Aorta (tissue), 5 donors: ENCODE measurements at regions of chr1 and their contacts with region 1.

Region 1: DNA sequence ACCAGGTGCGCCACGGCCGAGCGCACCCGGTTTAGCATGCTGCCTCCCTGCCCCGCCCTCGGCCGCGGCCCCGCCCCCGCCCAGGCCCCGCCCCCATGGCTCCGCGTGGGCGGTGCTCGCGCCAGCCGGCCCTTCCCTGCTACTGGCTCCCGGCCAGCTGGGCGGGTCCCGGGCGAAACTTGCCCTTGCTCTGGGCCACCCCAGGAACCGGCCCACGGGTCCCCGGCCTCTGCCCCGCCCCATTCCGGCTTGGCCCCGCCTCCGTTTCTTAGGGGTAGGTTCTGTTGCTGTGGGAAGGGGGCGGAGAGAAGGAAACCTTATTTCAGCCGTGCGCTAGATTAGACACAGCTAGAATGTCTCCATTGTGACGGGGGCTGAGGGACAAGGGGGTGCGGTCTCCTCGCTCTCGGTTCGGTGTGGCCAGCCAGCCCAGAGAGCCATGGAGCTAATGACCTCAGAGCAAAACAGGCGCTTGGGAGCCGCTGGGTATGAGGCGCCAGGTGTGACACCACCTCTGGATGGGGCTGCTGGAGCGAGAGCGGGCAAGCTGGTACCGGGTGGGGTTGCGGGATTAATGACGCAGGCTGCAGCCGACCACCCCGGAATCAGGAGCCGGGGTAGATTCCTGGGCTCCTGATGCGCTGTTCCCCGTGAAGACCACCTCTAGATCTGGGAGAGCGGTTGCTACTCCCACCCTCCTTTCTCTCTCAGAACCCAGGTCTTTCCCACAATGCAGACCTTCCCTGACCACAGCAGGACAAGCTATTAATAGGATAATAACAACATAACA is at the start of gene PPM1J:
- DNase-seq: peak; percentile 99 to 100
- ATAC-seq: peak; percentile 93
- H3K4me3 ChIP-seq: peak within 1 kb of the TSS; percentile 14 to 37
- H3K27ac ChIP-seq: no peak within 1 kb of the TSS
- H3K4me1 ChIP-seq: no peaks in the 10 kb centered on the region
- H3K27me3 ChIP-seq: no peaks in the 10 kb centered on the region
- total RNA-seq, gene PPM1J: 3.7 to 4.3 TPM

Region 2: GRCh38 chr1:112501810-112502641 is 213.4 kb before region 1 on chr1:
- intact Hi-C with region 1: loop called in 1 of 2 experiments (anchors 5 kb)
- DNase-seq: peak; percentile 81 to 91
- ATAC-seq: peak; percentile 84
- H3K4me3 ChIP-seq: peak overlapping the region; percentile 27 to 28
- H3K27ac ChIP-seq: no peak overlapping the region
- H3K4me1 ChIP-seq: no peaks in the 10 kb centered on the region
- H3K27me3 ChIP-seq: no peaks in the 10 kb centered on the region

Region 3: DNA sequence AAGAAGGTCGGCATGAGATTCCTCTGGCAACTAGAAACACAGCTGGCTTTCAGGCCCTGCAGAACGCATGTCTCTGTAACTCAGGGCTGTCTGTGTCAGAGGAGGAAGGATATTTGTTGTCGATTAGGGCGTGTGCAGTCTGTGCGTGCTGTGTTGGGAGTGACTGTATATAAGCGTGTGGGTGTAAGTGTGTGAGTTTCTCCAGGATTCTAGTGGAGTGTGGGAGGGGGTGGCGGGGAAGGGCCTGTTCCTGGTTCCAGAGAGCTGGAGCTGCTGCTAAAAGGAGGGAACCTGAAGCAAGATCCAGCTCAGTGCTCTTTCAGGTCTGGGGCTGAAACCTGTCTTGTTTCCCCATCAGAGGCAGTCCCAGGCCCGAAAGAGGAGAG is 166.3 kb after region 1 on chr1:
- intact Hi-C with region 1: loop called (anchors 2 to 5 kb)
- DNase-seq: no peak
- ATAC-seq: no peak
- H3K4me3 ChIP-seq: no peak overlapping the region
- H3K27ac ChIP-seq: no peak overlapping the region
- H3K4me1 ChIP-seq: no peaks in the 10 kb centered on the region
- H3K27me3 ChIP-seq: no peaks in the 10 kb centered on the region

Region 4: GRCh38 chr1:113042285-113043143 is 327.1 kb after region 1 on chr1:
- intact Hi-C with region 1: loop called (anchors 1 to 2 kb)
- DNase-seq: peak; percentile 83 to 90
- ATAC-seq: peak; percentile 91
- H3K4me3 ChIP-seq: no peak overlapping the region
- H3K27ac ChIP-seq: no peak overlapping the region
- H3K4me1 ChIP-seq: no peaks in the 10 kb centered on the region
- H3K27me3 ChIP-seq: no peaks in the 10 kb centered on the region

Region 5: DNA sequence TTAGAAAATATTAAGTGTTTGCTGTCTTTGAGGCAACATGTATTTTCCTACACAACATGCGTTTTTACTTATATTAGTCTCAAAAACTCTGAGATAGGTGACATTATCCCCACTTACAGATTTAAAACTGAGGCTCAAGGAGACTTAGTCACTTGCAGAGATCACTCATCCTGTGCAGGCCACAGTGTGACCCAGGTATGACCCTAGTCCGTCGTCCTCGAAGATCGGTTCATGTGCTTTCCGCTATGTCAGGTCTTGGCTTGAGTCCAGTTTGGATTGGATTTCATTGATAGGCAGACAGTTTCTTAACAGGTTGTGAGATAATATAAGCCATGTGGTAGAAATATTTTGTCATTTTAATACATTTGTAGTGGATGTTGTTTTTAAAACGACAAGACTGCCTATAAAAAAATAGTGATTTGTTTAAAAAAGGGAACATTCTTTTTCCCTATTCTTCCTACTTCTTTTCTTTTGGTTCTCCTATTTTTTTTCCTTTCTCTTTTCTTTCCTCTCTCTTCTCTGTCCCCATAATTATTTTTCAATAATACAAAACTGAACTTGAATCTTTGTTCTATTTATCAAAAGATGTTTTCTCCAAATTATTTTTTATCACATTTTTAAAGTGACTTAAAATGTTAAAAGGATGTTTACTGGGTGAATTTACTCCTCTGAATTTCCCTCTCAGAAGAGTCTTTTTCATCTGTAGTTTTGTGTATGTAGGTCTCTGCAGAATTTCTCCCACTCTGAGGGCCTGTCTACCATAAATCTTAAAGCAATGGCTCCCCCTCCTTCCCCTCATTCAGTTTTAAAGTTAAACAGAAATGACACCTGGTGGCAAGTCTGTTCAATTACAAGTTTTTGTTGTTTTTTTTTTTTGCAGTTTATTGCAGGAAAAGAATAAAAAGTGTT is 962.0 kb after region 1 on chr1:
- intact Hi-C with region 1: loop called (anchors 5 to 10 kb)
- DNase-seq: no peak
- ATAC-seq: no peak
- H3K4me3 ChIP-seq: no peak overlapping the region
- H3K27ac ChIP-seq: no peak overlapping the region
- H3K4me1 ChIP-seq: no peaks in the 10 kb centered on the region
- H3K27me3 ChIP-seq: no peaks in the 10 kb centered on the region